ENCODE measurements at regions of chr2 and their contacts with region 1.

Region 1: DNA sequence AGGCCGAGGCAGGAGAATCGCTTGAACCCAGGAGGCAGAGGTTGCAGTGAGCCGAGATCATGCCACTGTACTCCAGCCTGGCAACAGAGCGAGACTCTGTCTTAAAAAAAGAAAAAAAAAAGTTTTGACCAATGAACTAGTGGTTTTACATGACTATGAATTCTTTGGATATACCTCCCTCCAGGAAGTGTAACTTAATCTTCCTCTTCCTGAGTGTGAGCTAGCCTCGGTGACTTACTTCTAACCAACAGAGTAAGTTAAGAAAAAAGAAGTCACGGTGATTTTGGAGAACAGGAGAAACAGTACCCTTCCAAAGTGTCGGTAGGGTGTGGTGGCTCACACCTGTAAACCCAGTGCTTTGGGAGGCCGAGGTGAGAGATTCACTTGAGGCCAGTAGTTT is 7.1 kb downstream of the TIA1 start:
- DNase-seq: peak; percentile 54
- ATAC-seq: no peak
- H3K4me3 ChIP-seq: no peak overlapping the region
- H3K27ac ChIP-seq: no peak overlapping the region
- H3K4me1 ChIP-seq: peaks cover 6% of the 10 kb centered on the region
- H3K27me3 ChIP-seq: no peaks in the 10 kb centered on the region
- CTCF ChIP-seq: no peak
- POLR2A ChIP-seq: no peak
- RAD21 ChIP-seq: no peak

Region 2: GRCh38 chr2:70190418-70191243 is 50.7 kb before region 1 on chr2 and contains the start of gene C2orf42:
- CTCF ChIA-PET with region 1: no interaction called
- POLR2A ChIA-PET with region 1: interaction called, 12 read pairs
- dilution Hi-C with region 1: no loop called
- in situ Hi-C with region 1: no loop called
- intact Hi-C with region 1: no loop called
- DNase-seq: peak; percentile 98
- ATAC-seq: peak; percentile 96
- H3K4me3 ChIP-seq: peak within 1 kb of the TSS; percentile 90
- H3K27ac ChIP-seq: peak within 1 kb of the TSS; percentile 95
- H3K4me1 ChIP-seq: no peaks in the 10 kb centered on the region
- H3K27me3 ChIP-seq: no peaks in the 10 kb centered on the region
- CTCF ChIP-seq: 0 out of 2 replicates have a peak, but pooled peaks have one; percentile 9
- POLR2A ChIP-seq: peak; percentile 96
- RAD21 ChIP-seq: peak; percentile 24; the same call in 1 of the 2 replicates
- total RNA-seq, gene C2orf42: 24.4 and 31.5 TPM in 2 replicates

Measured in IMR-90 (cell line).